ENCODE measurements at regions of chr2 and their contacts with region 1.

Region 1: GRCh38 chr2:88159955-88160415 is 10.2 kb upstream of the THNSL2 start:
- DNase-seq: peak; percentile 75
- H3K4me3 ChIP-seq: peak overlapping the region in 1 of 2 experiments; percentile 21; a peak in 1 of 4 replicates
- H3K27ac ChIP-seq: no peak overlapping the region
- H3K4me1 ChIP-seq: no peaks in the 10 kb centered on the region
- H3K27me3 ChIP-seq: no peaks in the 10 kb centered on the region
- CTCF ChIP-seq: peak; percentile 92
- EP300 ChIP-seq: peak in 1 of 2 experiments; percentile 19; a peak in 1 of 4 replicates
- RAD21 ChIP-seq: peak; percentile 94

Region 2: DNA sequence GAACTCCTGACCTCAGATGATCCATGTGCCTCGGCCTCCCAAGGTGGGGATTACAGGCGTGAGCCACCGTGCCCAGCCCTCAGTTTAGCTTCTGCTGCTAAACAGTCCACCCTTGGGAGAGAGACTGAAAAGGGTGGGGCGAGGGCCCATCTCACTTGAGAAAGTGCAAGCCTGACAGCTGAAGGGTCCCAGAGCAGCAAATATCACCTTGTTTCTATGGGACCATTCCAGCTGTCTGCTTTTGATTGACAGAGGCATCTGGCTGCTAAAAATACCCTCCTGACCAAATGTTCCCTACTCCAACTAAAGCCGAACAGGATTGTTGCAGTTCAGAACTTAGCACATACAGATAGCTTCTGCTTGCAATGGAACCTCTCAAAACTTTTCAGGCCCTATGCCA is 92.8 kb before region 1 on chr2:
- CTCF ChIA-PET with region 1: interaction called, 147 read pairs
- POLR2A ChIA-PET with region 1: no interaction called
- DNase-seq: no peak
- H3K4me3 ChIP-seq: no peak overlapping the region
- H3K27ac ChIP-seq: no peak overlapping the region
- H3K4me1 ChIP-seq: no peaks in the 10 kb centered on the region; a peak in 1 of 4 replicates
- H3K27me3 ChIP-seq: no peaks in the 10 kb centered on the region
- CTCF ChIP-seq: no peak
- EP300 ChIP-seq: no peak
- RAD21 ChIP-seq: no peak

Region 3: DNA sequence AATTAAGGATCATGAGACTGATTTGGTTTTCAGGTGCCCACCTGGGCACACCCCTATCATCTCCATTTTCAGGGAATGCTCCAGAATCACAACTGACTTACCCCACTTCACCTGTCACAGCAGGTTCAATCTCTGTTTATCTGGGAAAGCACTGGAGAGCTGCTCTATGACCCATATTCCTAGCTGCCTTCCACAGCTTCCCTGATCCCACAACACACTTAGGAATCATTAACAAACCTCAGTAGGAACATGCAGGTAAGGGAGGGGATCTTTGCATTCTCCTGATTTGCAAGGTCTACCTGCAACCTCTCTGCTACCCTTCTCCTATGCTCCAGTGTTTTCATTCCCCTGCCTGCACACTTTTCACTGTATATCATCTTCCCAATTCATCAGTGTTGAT is 13.4 kb before region 1 on chr2:
- CTCF ChIA-PET with region 1: interaction called, 10 read pairs
- POLR2A ChIA-PET with region 1: no interaction called
- DNase-seq: no peak
- H3K4me3 ChIP-seq: no peak overlapping the region
- H3K27ac ChIP-seq: no peak overlapping the region
- H3K4me1 ChIP-seq: no peaks in the 10 kb centered on the region
- H3K27me3 ChIP-seq: no peaks in the 10 kb centered on the region
- CTCF ChIP-seq: no peak
- EP300 ChIP-seq: no peak
- RAD21 ChIP-seq: no peak

Region 4: DNA sequence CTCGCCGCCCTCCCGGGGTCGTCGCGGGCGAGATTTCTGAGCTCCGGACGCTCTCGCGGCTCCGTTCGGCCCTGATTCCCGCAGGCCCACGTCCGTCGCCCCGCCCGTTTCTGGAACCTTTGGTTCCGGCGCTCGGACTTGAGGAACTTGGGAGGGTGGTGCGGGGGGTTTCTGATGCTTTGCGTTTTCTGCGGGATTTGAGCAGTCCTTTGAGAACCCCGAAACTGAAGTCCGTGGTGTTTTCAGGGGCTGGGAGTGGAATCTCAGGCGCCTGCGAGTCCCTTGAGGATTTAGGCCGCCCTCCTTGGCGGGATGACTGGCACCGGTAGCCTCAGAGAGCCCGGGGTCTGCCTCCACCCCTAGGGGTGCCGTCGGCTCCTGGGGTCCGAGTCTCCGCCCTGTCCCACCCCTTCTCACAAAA is 10.5 kb after region 1 on chr2:
- CTCF ChIA-PET with region 1: interaction called, 12 read pairs
- POLR2A ChIA-PET with region 1: no interaction called
- DNase-seq: peak; percentile 39
- H3K4me3 ChIP-seq: peak overlapping the region in 1 of 2 experiments; percentile 27; a peak in 2 of 4 replicates
- H3K27ac ChIP-seq: no peak overlapping the region
- H3K4me1 ChIP-seq: no peaks in the 10 kb centered on the region
- H3K27me3 ChIP-seq: no peaks in the 10 kb centered on the region; the same call in 1 of the 2 replicates
- CTCF ChIP-seq: no peak
- EP300 ChIP-seq: no peak
- RAD21 ChIP-seq: no peak

Region 5: DNA sequence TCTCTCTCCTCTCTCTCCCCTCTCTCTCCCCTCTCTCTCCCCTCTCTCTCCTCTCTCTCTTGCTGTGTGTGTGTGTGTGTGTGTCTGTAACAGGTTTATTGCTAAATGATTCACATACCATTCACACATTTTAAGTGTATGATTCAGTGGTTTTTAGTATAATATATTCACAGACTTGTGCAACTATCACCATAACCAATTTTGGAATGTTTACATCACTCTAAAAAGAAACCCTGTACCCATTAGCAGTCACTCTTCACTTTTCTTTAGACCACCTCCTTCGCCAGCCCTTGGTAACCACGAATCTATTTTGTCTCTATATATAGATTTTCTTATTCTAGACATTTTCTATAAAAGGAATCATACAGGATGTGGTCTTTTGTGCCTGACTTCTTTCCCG is 21.5 kb after region 1 on chr2:
- CTCF ChIA-PET with region 1: interaction called, 12 read pairs
- POLR2A ChIA-PET with region 1: no interaction called
- DNase-seq: no peak
- H3K4me3 ChIP-seq: no peak overlapping the region
- H3K27ac ChIP-seq: no peak overlapping the region
- H3K4me1 ChIP-seq: no peaks in the 10 kb centered on the region; a peak in 1 of 4 replicates
- H3K27me3 ChIP-seq: no peaks in the 10 kb centered on the region
- CTCF ChIP-seq: no peak
- EP300 ChIP-seq: no peak
- RAD21 ChIP-seq: no peak

Region 6: DNA sequence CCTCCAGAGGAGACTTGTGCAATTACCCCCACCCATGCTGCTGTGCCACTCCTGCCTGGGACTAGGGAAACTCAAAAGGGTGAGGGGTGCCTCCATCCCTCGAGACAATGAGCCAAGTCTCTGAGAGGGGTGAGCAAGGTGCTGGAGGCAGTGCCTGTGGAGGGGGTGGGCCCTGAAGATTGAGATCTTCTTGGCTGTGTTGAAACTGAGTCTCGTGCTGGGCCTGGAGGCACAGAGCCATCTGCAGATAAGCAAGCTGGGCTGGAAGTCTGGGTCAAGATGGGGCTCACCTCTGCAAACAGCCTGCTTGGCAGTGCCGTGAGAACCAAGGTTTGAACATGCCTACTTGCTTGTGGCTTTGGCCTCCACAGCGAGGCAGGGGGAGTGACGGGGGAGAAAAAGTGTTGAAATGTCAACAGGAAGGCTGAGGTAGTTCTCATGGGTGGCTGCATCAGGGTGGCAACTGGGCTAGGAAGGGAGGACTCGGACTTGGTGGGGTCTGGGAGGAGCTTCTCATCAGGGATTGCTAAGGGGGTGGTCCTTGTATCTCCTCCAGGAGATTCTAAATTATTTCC is 109.8 kb after region 1 on chr2:
- CTCF ChIA-PET with region 1: no interaction called
- POLR2A ChIA-PET with region 1: no interaction called
- DNase-seq: no peak
- H3K4me3 ChIP-seq: no peak overlapping the region
- H3K27ac ChIP-seq: no peak overlapping the region
- H3K4me1 ChIP-seq: no peaks in the 10 kb centered on the region; a peak in 1 of 4 replicates
- H3K27me3 ChIP-seq: no peaks in the 10 kb centered on the region
- CTCF ChIP-seq: no peak
- EP300 ChIP-seq: no peak
- RAD21 ChIP-seq: no peak

Measured in SK-N-SH (cell line).